ENCODE measurements at regions of chr7 and their contacts with region 1.

Region 1: GRCh38 chr7:99408379-99409191 is at the starts of genes BUD31 and PDAP1:
- DNase-seq: peak; percentile 95 to 98
- ATAC-seq: peak; percentile 84 to 95 (median 85)
- H3K4me3 ChIP-seq: peak within 1 kb of the TSS; percentile 83
- H3K4me3 Mint-ChIP-seq: peak within 1 kb of the TSS; percentile 96
- H3K27ac ChIP-seq: peak within 1 kb of the TSS; percentile 98
- H3K27ac Mint-ChIP-seq: peak within 1 kb of the TSS; percentile 93
- H3K4me1 ChIP-seq: peaks cover 57% of the 10 kb centered on the region
- H3K4me1 Mint-ChIP-seq: peaks cover 50 to 59% of the 10 kb centered on the region in 2 donors
- H3K27me3 ChIP-seq: no peaks in the 10 kb centered on the region
- H3K27me3 Mint-ChIP-seq: no peaks in the 10 kb centered on the region
- CTCF ChIP-seq: no peak
- total RNA-seq, gene BUD31: 145 to 190 (median 187) TPM
- total RNA-seq, gene PDAP1: 55.3 to 60.6 (median 59.3) TPM

Region 2: DNA sequence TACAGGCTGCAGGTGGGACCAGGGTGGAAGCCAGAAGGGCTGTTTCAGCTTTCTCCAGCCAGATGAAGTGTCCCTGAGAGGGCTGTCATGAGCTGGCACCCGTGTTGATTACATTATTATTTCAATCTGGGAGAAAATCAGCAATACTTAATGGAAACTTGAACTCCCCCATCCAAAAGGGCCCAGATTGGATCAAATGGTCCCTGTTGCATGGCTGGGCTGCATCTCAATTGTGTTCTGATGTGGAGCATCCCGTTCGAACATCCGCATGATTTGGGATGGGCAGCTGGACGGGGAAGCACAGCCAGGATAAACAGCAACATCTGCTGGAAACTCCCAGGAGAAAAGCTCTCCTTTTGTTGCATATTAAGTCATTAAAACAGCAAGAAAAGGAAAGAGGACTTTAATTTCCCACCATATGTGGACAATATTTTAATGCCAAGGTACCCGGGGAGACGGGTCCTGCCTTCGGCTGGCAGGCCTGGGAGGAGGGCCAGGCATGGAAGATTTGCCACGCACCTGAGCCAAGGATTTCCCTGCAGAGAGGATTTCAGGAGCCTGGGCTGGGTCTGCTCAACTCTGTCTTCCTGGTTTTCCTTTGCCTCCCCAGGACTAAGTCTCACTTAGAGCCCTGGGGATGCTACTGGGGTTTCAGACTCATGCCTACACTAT is 739.1 kb before region 1 on chr7:
- intact Hi-C with region 1: no loop called
- DNase-seq: no peak
- ATAC-seq: no peak
- H3K4me3 ChIP-seq: no peak overlapping the region
- H3K4me3 Mint-ChIP-seq: no peak overlapping the region
- H3K27ac ChIP-seq: no peak overlapping the region
- H3K27ac Mint-ChIP-seq: no peak overlapping the region
- H3K4me1 ChIP-seq: no peaks in the 10 kb centered on the region
- H3K4me1 Mint-ChIP-seq: no peaks in the 10 kb centered on the region
- H3K27me3 ChIP-seq: no peaks in the 10 kb centered on the region
- H3K27me3 Mint-ChIP-seq: no peaks in the 10 kb centered on the region
- CTCF ChIP-seq: no peak

Region 3: DNA sequence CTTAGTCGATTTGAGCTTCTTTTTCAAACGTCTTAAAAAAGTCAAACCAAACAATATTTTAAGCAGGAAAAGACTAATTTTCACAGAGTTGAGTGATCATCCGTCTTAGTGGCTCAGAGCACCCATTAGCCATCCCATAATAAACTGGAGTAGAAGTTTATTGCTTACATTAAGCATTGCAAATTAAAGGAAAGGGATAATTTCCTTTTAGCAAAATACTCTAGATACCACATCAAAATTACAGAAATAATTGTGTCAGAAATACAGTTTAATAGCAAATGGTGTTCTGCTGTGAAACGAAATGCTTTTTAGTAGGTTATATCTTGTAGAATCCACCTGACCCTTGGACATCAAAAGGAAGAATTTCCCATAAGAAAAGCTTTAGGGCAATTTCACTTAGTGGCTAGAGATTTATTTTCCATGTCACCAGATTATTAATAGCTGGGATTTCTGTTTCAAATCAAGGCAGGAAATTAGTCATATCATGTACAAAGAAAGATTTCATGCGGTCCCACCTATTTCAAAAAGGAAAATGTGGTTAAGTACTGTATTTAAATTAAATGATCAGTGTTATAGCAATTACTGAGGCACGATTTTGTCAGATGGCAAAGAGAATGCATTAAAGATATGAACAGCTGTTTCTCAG is 695.3 kb before region 1 on chr7:
- intact Hi-C with region 1: no loop called
- DNase-seq: no peak
- ATAC-seq: no peak
- H3K4me3 ChIP-seq: no peak overlapping the region
- H3K4me3 Mint-ChIP-seq: no peak overlapping the region
- H3K27ac ChIP-seq: no peak overlapping the region
- H3K27ac Mint-ChIP-seq: no peak overlapping the region
- H3K4me1 ChIP-seq: no peaks in the 10 kb centered on the region
- H3K4me1 Mint-ChIP-seq: no peaks in the 10 kb centered on the region
- H3K27me3 ChIP-seq: no peaks in the 10 kb centered on the region
- H3K27me3 Mint-ChIP-seq: no peaks in the 10 kb centered on the region
- CTCF ChIP-seq: no peak

Region 4: DNA sequence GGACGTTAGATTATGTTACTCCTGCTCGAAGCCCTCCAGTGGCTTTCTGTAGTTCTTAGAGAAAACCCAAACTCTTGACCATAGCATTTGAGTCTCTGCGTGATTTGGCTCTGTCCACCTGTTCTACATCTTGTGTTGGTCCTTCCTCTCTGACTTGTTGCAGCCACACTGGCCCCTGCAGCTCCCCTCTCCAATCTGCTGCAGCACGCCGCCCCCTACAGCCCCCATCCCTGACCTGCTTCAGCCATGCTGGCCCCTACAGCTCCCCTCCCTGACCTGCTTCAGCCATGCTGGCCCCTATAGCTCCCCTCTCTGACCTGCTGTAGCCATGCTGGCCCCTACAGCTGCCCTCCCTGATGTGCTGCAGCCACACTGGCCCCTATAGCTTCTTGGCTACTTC is 501.0 kb before region 1 on chr7:
- intact Hi-C with region 1: no loop called
- DNase-seq: no peak
- ATAC-seq: no peak
- H3K4me3 ChIP-seq: no peak overlapping the region
- H3K4me3 Mint-ChIP-seq: no peak overlapping the region
- H3K27ac ChIP-seq: no peak overlapping the region
- H3K27ac Mint-ChIP-seq: peak overlapping the region in 1 of 2 donors; percentile 10
- H3K4me1 ChIP-seq: no peaks in the 10 kb centered on the region
- H3K4me1 Mint-ChIP-seq: no peaks in the 10 kb centered on the region
- H3K27me3 ChIP-seq: no peaks in the 10 kb centered on the region
- H3K27me3 Mint-ChIP-seq: no peaks in the 10 kb centered on the region
- CTCF ChIP-seq: no peak

Region 5: GRCh38 chr7:99374103-99375064 is 34.2 kb before region 1 on chr7 and contains the start of gene ARPC1B:
- intact Hi-C with region 1: loop called (anchors 5 kb)
- DNase-seq: peak; percentile 72 to 94
- ATAC-seq: peak; percentile 71 to 90 (median 84)
- H3K4me3 ChIP-seq: peak within 1 kb of the TSS; percentile 76
- H3K4me3 Mint-ChIP-seq: peak within 1 kb of the TSS; percentile 85
- H3K27ac ChIP-seq: peak within 1 kb of the TSS; percentile 71
- H3K27ac Mint-ChIP-seq: peak within 1 kb of the TSS; percentile 86 to 97
- H3K4me1 ChIP-seq: peaks cover 41% of the 10 kb centered on the region
- H3K4me1 Mint-ChIP-seq: peaks cover 17 to 25% of the 10 kb centered on the region in 2 donors
- H3K27me3 ChIP-seq: no peaks in the 10 kb centered on the region
- H3K27me3 Mint-ChIP-seq: no peaks in the 10 kb centered on the region
- CTCF ChIP-seq: no peak
- total RNA-seq, gene ARPC1B: 161 to 184 (median 179) TPM

Region 6: DNA sequence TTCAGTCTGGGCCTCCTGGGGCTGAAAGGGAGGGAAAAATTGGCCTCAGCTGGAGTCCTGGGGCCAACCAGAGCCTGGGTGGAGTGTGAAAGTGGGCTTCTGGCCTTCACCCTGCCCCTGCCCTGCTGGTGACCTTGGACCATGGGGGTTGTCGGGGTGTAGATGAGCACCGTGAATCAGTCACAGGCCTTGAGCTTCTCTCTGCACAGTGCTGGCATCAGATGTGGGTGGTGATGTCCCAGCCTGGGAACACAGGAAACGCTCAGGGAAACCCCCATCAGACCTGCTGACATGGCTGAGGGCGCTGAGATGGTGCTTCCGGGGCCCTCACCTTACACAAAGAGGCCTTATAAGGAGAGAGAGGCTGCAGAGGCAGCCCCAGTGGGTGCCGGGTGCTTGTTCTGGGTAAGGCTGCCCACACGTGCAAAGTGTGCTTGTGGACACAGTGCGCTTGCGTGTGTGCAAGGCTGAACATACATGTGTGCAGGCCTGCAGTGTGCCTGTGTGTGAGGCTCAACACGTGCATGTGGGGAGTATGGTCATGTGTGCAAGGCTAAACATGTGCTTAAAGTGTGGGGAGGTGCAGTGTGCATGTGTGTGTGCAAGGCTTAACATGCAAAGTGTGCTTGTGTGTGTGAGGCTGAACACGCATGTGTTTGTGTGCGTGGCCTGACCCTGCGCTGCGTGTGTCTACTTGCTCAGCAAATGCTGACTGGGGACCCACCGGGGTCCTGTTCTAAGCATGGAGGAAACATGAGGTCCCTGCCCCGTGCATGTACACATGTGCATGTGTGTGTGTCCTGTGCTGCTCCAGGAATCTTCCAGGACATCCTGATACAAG is 27.5 kb before region 1 on chr7:
- intact Hi-C with region 1: loop called (anchors 1 kb)
- DNase-seq: peak; percentile 82 to 97
- ATAC-seq: peak; percentile 78 to 95 (median 92)
- H3K4me3 ChIP-seq: peak overlapping the region; percentile 24
- H3K4me3 Mint-ChIP-seq: peak overlapping the region; percentile 87
- H3K27ac ChIP-seq: peak overlapping the region; percentile 100
- H3K27ac Mint-ChIP-seq: peak overlapping the region; percentile 97
- H3K4me1 ChIP-seq: peaks cover 91% of the 10 kb centered on the region
- H3K4me1 Mint-ChIP-seq: peaks cover 44 to 69% of the 10 kb centered on the region in 2 donors
- H3K27me3 ChIP-seq: no peaks in the 10 kb centered on the region
- H3K27me3 Mint-ChIP-seq: no peaks in the 10 kb centered on the region
- CTCF ChIP-seq: no peak

Region 7: DNA sequence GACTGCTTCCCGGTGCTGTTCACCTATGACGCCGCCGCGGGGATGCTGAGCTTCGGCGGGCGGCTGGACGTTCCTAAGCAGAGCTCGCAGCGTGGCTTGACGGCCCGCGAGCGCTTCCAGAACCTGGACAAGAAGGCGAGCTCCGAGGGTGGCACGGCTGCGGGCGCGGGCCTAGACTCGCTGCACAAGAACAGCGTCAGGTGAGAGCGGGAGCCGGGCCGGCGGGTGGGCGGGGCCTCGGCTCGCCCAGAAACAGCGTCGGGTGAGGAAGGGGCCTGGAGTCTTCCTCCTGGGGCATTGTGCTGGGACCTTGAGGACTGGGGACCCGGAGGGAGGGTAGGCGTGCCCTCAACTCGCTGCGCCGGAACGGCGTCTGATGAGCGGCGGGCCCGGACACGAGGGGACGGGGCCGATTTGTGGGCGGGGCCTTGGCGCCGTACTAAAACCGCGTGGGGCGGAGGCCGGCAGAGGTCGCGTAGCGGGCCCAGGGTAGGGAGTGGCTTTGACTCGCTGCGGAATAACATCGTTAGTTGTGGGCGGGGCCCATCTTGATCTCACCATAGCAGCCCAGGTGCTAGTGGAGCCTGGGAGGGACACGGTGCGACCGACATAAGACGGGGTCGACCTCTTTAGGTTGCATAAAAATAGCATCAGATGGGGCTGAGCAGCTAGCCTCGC is 15.8 kb before region 1 on chr7:
- intact Hi-C with region 1: loop called (anchors 2 kb)
- DNase-seq: peak; percentile 73 to 90
- ATAC-seq: peak; percentile 93 to 94 (median 93)
- H3K4me3 ChIP-seq: peak overlapping the region; percentile 45
- H3K4me3 Mint-ChIP-seq: peak overlapping the region; percentile 86
- H3K27ac ChIP-seq: peak overlapping the region; percentile 62
- H3K27ac Mint-ChIP-seq: peak overlapping the region; percentile 80 to 87
- H3K4me1 ChIP-seq: peaks cover 23% of the 10 kb centered on the region
- H3K4me1 Mint-ChIP-seq: peaks cover 12 to 23% of the 10 kb centered on the region in 2 donors
- H3K27me3 ChIP-seq: no peaks in the 10 kb centered on the region
- H3K27me3 Mint-ChIP-seq: no peaks in the 10 kb centered on the region
- CTCF ChIP-seq: no peak

Region 8: GRCh38 chr7:99472561-99473243 is 64.1 kb after region 1 on chr7 and contains the start of gene ZNF789:
- intact Hi-C with region 1: loop called (anchors 1 kb)
- DNase-seq: peak; percentile 95 to 97
- ATAC-seq: peak; percentile 96 to 100 (median 97)
- H3K4me3 ChIP-seq: peak within 1 kb of the TSS; percentile 64
- H3K4me3 Mint-ChIP-seq: peak within 1 kb of the TSS; percentile 100
- H3K27ac ChIP-seq: peak within 1 kb of the TSS; percentile 54
- H3K27ac Mint-ChIP-seq: peak within 1 kb of the TSS; percentile 94 to 96
- H3K4me1 ChIP-seq: peaks cover 15% of the 10 kb centered on the region
- H3K4me1 Mint-ChIP-seq: peaks cover 19 to 26% of the 10 kb centered on the region in 2 donors
- H3K27me3 ChIP-seq: no peaks in the 10 kb centered on the region
- H3K27me3 Mint-ChIP-seq: no peaks in the 10 kb centered on the region
- CTCF ChIP-seq: no peak
- total RNA-seq, gene ZNF789: 16.7 to 18.6 (median 16.8) TPM

Region 9: DNA sequence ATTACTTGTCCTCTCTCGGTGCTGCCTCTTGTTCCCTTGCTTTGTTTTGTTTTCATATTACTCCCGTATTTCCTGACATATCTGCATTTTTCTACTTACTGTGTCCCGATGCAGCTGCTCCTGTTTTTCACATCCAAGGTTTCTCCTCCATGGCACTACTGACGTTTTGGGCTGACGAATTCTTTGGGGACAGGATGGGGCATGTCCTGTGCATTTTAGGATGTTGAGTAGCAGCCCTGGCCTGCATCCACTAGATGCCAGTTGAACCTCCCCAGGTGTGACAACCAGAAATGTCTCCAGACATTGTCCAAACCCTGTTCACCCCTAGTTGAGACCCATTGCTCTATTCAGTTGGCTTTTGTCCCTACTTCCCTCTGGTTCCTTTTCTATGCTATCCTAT is 76.5 kb after region 1 on chr7:
- intact Hi-C with region 1: no loop called
- DNase-seq: no peak
- ATAC-seq: no peak
- H3K4me3 ChIP-seq: no peak overlapping the region
- H3K4me3 Mint-ChIP-seq: no peak overlapping the region
- H3K27ac ChIP-seq: no peak overlapping the region
- H3K27ac Mint-ChIP-seq: no peak overlapping the region
- H3K4me1 ChIP-seq: no peaks in the 10 kb centered on the region
- H3K4me1 Mint-ChIP-seq: peaks cover 0 to 5% of the 10 kb centered on the region in 2 donors
- H3K27me3 ChIP-seq: no peaks in the 10 kb centered on the region
- H3K27me3 Mint-ChIP-seq: no peaks in the 10 kb centered on the region
- CTCF ChIP-seq: no peak

Region 10: DNA sequence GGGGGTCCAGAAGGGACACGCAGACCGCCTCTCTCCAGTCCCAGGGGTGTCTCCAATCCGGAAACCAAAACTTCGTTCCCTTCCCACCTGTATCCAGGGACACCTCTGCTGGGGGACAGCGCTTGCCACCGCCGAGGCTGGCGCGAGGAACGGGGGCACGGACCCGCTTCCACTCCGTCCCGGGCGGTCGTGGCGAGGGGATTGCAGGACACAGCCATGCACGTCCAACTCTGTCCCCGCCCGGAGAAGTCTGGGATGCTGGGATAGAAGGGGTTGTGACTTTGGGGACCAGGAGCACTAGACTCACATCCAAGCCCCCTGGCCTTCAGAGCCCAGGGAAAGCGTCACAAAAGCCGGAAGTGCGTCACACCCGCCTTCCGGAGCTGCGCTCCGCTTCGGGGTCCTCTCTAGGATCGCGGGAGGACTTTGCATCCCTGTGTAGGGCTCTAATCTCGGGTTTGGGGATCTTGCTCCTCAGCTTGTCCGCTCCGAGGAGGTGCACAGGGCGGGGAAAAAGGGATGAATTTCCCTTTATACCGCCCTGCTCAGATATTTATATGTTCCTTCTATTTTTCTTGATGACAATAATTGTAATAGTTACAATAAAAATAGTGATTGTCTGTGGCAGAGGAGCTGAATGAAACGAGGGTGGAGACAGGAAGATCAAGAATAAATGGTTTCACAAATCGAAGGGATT is 143.3 kb after region 1 on chr7 and contains the start of gene FAM200A:
- intact Hi-C with region 1: loop called (anchors 5 kb)
- DNase-seq: peak; percentile 79 to 96
- ATAC-seq: peak; percentile 97 to 99 (median 98)
- H3K4me3 ChIP-seq: peak within 1 kb of the TSS; percentile 90
- H3K4me3 Mint-ChIP-seq: peak within 1 kb of the TSS; percentile 92
- H3K27ac ChIP-seq: peak within 1 kb of the TSS; percentile 82
- H3K27ac Mint-ChIP-seq: peak within 1 kb of the TSS; percentile 94 to 95
- H3K4me1 ChIP-seq: peaks cover 11% of the 10 kb centered on the region
- H3K4me1 Mint-ChIP-seq: peaks cover 24 to 40% of the 10 kb centered on the region in 2 donors
- H3K27me3 ChIP-seq: no peaks in the 10 kb centered on the region
- H3K27me3 Mint-ChIP-seq: no peaks in the 10 kb centered on the region
- CTCF ChIP-seq: no peak
- total RNA-seq, gene FAM200A: 2.3 to 3.1 (median 2.6) TPM

Measured in natural killer cell (primary cell).